Heart left ventricle (tissue), 16 donors: ENCODE measurements at regions of chr19 and their contacts with region 1.

Region 1: DNA sequence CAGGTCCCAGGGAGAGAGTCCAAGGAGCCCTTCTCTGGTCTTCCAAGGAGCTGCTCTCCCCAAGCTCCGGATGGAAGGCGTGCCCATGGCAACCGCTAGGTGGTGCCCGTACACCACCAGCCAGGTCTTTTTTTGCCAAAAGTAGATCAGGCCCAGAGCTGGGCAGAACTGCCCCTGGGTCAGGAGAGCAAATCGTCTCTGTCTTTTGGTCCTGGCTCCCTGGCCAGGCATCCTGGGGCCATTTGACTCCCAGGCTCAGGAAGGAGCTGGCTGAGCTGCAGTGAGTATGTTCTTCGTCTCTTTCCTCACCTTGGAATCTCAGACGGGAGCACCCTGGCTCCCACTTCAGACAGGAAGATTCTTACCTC is 24.6 kb upstream of the BCL3 start:
- DNase-seq: peak; percentile 77 to 91 (median 86)
- ATAC-seq: peak; percentile 75 to 91 (median 90)
- H3K4me3 ChIP-seq: no peak overlapping the region
- H3K27ac ChIP-seq: peak overlapping the region in 6 of 12 donors; percentile 10 to 70 (median 35)
- H3K4me1 ChIP-seq: peaks cover 7 to 60% (median 29%) of the 10 kb centered on the region in 12 donors
- H3K27me3 ChIP-seq: no peaks in the 10 kb centered on the region
- CTCF ChIP-seq: peak; percentile 96 to 100 (median 98)
- POLR2A ChIP-seq: no peak

Region 2: DNA sequence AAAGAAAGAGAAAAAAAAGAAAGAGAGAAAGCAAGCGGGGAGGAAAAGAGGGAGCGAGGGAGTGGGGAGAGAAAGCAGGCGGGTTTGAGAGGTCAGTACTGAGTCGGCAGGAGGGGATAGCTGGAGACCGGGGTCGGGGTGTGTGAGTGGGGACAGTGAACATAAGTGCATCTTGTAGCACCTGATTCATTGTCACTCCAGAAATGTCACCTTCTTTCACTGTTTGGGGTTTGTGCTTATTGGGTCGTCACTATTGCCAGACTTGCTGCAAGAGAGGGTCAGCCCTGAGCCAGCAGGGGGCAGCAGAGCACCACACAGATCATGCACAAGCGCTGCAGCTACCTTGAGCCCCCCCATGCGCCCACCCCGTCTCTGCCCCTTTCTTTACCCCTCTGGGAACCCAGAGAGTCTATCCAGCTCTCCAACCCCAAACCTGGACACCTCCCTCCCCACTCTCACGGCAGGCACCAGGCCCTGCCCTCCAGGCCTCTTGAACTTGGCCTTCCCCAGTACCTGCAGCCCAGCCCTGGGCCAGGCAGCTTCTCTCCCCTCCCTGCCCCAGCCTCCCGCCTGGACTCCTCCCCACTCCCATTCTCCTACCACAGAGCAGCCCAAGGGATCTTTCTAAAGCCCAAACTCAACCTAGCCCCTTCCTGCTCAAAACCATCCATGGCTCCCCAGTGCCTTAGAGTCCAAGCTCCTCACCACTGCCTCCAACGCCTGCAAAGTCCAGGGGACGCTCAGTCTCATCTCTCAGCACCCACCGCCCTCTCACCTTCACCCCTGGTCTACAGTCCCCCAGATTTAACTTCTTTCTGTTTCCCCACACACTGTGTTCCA is 34.7 kb before region 1 on chr19:
- intact Hi-C with region 1: loop called in 7 of 10 experiments (anchors 1 to 5 kb)
- DNase-seq: peak; percentile 67 to 87 (median 75)
- ATAC-seq: peak; percentile 21 to 63 (median 46)
- H3K4me3 ChIP-seq: no peak overlapping the region
- H3K27ac ChIP-seq: peak overlapping the region in 1 of 12 donors; percentile 29
- H3K4me1 ChIP-seq: peaks cover 0 to 65% (median 22%) of the 10 kb centered on the region in 12 donors
- H3K27me3 ChIP-seq: no peaks in the 10 kb centered on the region
- CTCF ChIP-seq: peak; percentile 90 to 96 (median 94)
- POLR2A ChIP-seq: no peak

Region 3: GRCh38 chr19:44741841-44742352 is 18.0 kb after region 1 on chr19:
- intact Hi-C with region 1: loop called in 2 of 10 experiments (anchors 2 kb)
- DNase-seq: peak; percentile 97 to 100 (median 98)
- ATAC-seq: peak; percentile 93 to 96 (median 94)
- H3K4me3 ChIP-seq: peak overlapping the region in 2 of 12 donors; percentile 8
- H3K27ac ChIP-seq: peak overlapping the region; percentile 76 to 100 (median 92)
- H3K4me1 ChIP-seq: peaks cover 7 to 90% (median 45%) of the 10 kb centered on the region in 12 donors
- H3K27me3 ChIP-seq: no peaks in the 10 kb centered on the region
- CTCF ChIP-seq: no peak
- POLR2A ChIP-seq: peak in 1 of 2 donors; percentile 50

Region 4: GRCh38 chr19:44757735-44758505 is 34.0 kb after region 1 on chr19:
- intact Hi-C with region 1: loop called in 2 of 10 experiments (anchors 5 kb)
- DNase-seq: peak; percentile 85 to 92 (median 88)
- ATAC-seq: peak; percentile 44 to 66 (median 54)
- H3K4me3 ChIP-seq: peak overlapping the region; percentile 12 to 69 (median 54)
- H3K27ac ChIP-seq: peak overlapping the region; percentile 75 to 100 (median 94)
- H3K4me1 ChIP-seq: peaks cover 23 to 65% (median 50%) of the 10 kb centered on the region in 12 donors
- H3K27me3 ChIP-seq: no peaks in the 10 kb centered on the region
- CTCF ChIP-seq: peak in 9 of 12 donors; percentile 8 to 57 (median 38)
- POLR2A ChIP-seq: no peak

Region 5: GRCh38 chr19:44764975-44765948 is 41.3 kb after region 1 on chr19:
- intact Hi-C with region 1: loop called (anchors 1 to 2 kb)
- DNase-seq: peak in 2 of 5 donors; percentile 37 to 64
- ATAC-seq: peak in 1 of 4 donors; percentile 38
- H3K4me3 ChIP-seq: no peak overlapping the region
- H3K27ac ChIP-seq: peak overlapping the region in 1 of 12 donors; percentile 62
- H3K4me1 ChIP-seq: peaks cover 0 to 56% (median 0%) of the 10 kb centered on the region in 12 donors
- H3K27me3 ChIP-seq: no peaks in the 10 kb centered on the region
- CTCF ChIP-seq: no peak
- POLR2A ChIP-seq: no peak

Region 6: GRCh38 chr19:44770550-44771257 is 46.8 kb after region 1 on chr19:
- intact Hi-C with region 1: loop called (anchors 1 to 2 kb)
- DNase-seq: peak; percentile 89 to 95 (median 94)
- ATAC-seq: peak; percentile 96 to 99 (median 99)
- H3K4me3 ChIP-seq: peak overlapping the region in 1 of 12 donors; percentile 9
- H3K27ac ChIP-seq: peak overlapping the region in 1 of 12 donors; percentile 50
- H3K4me1 ChIP-seq: peaks cover 0 to 37% (median 1%) of the 10 kb centered on the region in 12 donors
- H3K27me3 ChIP-seq: no peaks in the 10 kb centered on the region
- CTCF ChIP-seq: peak in 11 of 12 donors; percentile 81 to 91 (median 87)
- POLR2A ChIP-seq: no peak